AG04449 (cell line): ENCODE measurements at regions of chr5 and their contacts with region 1.

Region 1: GRCh38 chr5:67246108-67246507 is 49.5 kb upstream of the CD180 start:
- DNase-seq: peak; percentile 36
- H3K4me3 ChIP-seq: no peak overlapping the region
- CTCF ChIP-seq: peak; percentile 23

Region 2: GRCh38 chr5:67234671-67235176 is 11.4 kb before region 1 on chr5:
- CTCF ChIA-PET with region 1: interaction called, 11 read pairs
- POLR2A ChIA-PET with region 1: no interaction called
- DNase-seq: peak; percentile 24
- H3K4me3 ChIP-seq: no peak overlapping the region
- CTCF ChIP-seq: no peak

Region 3: GRCh38 chr5:67268231-67269021 is 22.3 kb after region 1 on chr5:
- CTCF ChIA-PET with region 1: interaction called, 23 read pairs
- POLR2A ChIA-PET with region 1: no interaction called
- DNase-seq: peak; percentile 57
- H3K4me3 ChIP-seq: peak overlapping the region; percentile 31
- CTCF ChIP-seq: no peak

Region 4: DNA sequence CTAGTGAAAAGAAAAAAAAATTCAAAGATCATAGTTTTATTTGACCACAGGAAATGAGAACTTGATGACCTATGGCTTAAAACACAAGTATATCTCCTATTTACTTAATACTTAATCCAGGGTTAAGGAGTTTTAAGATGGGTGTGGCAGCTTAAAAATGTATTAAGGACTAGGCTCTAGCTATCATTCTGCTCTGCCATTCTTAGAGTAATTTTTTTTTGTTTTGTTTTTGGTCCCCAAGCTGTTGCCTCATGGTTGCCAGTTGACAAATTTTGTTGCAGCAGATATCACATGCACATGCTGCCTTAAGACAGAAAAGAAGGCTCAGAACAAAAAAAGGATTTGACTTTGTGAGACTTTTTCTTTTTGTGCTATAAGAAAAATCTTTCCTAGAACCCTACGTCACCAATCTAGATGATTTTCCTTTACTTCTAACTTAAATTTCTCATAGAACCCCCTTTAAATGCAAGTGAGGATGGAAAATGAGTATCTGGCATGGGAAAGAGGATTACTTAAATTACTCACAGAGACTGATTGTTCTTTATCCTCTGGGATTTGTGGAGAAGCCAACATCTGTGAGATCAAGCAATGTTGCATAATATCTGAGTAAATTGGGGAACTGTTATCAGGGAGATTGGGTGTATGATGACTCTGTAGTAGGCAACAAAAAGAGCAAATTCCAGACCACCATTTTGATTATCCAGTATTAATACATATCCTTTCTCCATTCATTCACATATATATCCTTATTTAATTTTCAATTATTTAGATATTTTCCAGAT is 315.2 kb after region 1 on chr5:
- CTCF ChIA-PET with region 1: no interaction called
- POLR2A ChIA-PET with region 1: no interaction called
- DNase-seq: no peak
- H3K4me3 ChIP-seq: no peak overlapping the region
- CTCF ChIP-seq: no peak

Region 5: GRCh38 chr5:68252673-68253623 is 1006.8 kb after region 1 on chr5:
- CTCF ChIA-PET with region 1: interaction called, 165 read pairs
- POLR2A ChIA-PET with region 1: no interaction called
- DNase-seq: no peak
- H3K4me3 ChIP-seq: no peak overlapping the region
- CTCF ChIP-seq: peak; percentile 80

Region 6: DNA sequence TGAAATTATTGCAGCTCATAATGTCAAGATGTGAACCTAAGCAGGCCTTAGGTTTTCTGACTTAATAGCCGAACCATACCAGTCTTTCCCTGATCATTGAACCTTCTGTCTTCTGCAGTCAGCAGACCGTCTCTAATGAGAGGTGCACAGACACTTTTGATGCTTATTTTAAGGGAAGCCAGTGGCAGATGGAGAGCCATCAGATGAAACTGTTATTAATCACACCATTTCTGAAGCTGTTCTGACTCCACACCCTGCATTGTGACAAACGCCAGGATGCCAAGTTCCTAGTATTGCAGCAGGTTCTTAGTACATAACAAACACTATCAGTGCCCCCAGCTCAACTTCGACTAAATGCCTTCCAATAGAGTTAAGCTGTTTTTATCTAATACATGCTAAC is 1012.4 kb after region 1 on chr5:
- CTCF ChIA-PET with region 1: interaction called, 165 read pairs
- POLR2A ChIA-PET with region 1: no interaction called
- DNase-seq: no peak
- H3K4me3 ChIP-seq: no peak overlapping the region
- CTCF ChIP-seq: no peak

Region 7: DNA sequence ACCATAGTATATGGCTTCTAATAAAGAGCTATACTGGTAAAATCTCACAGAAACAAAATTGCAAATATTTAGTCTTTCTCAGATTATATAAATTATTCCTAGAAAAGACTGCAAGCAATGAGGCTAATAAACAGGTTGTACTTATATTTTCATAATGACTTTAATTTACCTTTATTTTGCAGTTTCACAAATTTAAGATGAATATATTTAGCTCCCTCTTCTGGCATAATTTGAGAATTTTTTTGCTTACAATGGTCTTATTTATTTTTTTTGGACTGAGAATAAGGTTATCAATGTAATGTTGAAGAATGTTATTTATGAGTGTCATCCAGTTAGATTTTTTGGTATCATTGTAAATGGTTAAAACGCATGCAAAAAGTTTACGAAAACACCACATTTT is 1026.2 kb after region 1 on chr5:
- CTCF ChIA-PET with region 1: interaction called, 37 read pairs
- POLR2A ChIA-PET with region 1: no interaction called
- DNase-seq: no peak
- H3K4me3 ChIP-seq: no peak overlapping the region
- CTCF ChIP-seq: no peak